ENCODE measurements at regions of chr7 and their contacts with region 1.

Region 1: GRCh38 chr7:67484244-67484751 is 487.7 kb downstream of the TYW1 start:
- DNase-seq: peak; percentile 22 to 88 (median 56)

Region 2: DNA sequence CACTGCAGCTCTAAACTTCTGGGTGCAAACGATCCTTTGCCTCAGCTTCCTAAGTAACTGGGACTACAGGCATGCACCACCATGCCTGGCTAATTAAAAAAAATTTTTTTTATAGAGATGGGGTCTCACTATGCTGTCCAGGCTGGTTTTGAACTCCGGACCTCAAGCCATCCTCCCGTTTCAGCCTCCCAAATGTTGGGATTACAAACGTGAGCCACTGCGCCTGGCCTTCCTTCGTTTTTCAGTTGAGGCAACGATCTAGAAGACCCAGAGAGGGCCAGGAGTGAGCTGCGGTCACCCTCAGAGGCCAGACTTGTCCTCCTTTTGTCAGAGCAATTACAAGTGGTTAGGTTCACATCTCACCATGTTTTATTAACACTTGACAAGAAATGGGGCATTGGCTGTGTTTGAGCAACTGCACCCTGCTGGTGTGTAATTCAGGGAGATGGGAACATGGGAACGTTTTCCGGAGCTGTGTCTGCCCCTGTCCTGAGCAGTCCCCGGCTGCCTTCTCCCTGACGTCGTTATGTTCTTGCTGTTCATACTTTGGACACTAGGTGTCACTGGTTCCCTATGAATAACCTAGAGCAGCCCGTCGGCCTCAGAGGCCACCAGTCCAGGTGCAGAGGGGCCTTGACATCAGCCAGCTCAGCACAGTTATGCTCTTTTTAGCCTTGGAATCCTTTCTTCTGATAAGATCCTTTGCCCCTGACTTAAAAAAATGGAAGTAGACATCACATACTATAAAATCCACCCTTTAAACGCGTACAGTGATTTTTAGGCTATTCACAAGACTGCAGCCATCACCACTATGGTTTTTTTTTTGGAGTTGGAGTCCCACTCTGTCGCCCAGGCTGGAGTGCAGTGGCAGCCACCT is 112.6 kb before region 1 on chr7:
- intact Hi-C with region 1: loop called (anchors 10 kb)
- DNase-seq: peak in 7 of 10 donors; percentile 32 to 90 (median 45)

Region 3: GRCh38 chr7:68550027-68550426 is 1065.7 kb after region 1 on chr7:
- intact Hi-C with region 1: no loop called
- DNase-seq: no peak

Region 4: DNA sequence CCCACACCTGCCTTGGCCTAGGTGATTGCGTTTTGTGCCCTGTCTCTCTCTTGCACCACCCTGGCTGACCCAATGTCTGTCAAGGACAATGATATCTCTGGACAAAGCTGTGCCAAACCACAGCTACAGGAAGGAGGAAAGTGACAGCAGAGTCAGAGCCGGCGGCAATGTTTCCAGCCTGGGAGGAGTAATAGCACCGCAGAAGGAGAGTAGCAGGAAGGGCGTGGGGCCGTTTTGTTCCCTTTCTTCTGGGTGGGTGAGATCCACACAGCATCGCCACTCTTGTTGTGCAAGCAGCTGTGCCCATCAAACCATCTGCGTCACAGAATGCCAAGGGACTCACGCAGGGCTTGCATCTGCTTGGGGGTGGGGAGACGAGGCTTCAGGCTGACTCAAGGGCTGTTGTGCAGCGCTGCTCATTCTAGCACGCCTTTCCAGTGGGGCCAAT is 1772.4 kb after region 1 on chr7:
- intact Hi-C with region 1: no loop called
- DNase-seq: peak in 9 of 10 donors; percentile 19 to 92 (median 45)

Measured in posterior cingulate gyrus (tissue), 11 donors.